ENCODE measurements at regions of chr18 and their contacts with region 1.

Region 1: DNA sequence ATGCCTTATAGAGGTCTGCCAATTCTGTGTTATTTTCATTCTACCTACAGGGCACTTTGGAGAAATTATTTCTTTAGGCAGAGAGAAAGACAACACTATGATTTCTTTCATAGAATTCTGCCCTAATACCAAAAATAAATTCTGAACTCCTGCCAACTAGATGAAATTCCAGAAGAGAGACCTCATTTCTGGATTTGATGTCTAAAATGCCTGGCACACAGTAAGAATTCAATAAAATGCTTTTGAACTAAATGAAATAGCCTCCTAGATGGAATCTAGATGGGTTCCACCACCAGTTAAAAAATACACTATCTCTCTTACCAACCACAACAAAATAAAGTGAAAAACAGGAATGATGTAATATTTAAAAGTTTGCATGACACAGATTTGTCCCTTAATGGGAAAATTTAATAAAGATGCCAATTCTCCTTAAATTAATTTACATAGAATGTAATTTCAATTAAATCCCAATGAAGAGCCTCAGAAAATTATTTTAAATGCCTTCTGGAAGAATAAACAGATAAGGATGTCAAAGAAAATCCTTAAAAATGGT is 75.0 kb downstream of the OSBPL1A start:
- DNase-seq: no peak
- H3K4me3 ChIP-seq: no peak overlapping the region
- H3K27ac ChIP-seq: peak overlapping the region in 1 of 2 donors; percentile 45
- H3K4me1 ChIP-seq: no peaks in the 10 kb centered on the region
- H3K27me3 ChIP-seq: no peaks in the 10 kb centered on the region
- CTCF ChIP-seq: no peak

Region 2: GRCh38 chr18:24112874-24113615 is 209.6 kb before region 1 on chr18:
- intact Hi-C with region 1: no loop called
- DNase-seq: no peak
- H3K4me3 ChIP-seq: no peak overlapping the region
- H3K27ac ChIP-seq: no peak overlapping the region
- H3K4me1 ChIP-seq: no peaks in the 10 kb centered on the region
- H3K27me3 ChIP-seq: no peaks in the 10 kb centered on the region
- CTCF ChIP-seq: no peak

Region 3: GRCh38 chr18:24219561-24220317 is 102.9 kb before region 1 on chr18:
- intact Hi-C with region 1: loop called (anchors 5 kb)
- DNase-seq: no peak
- H3K4me3 ChIP-seq: no peak overlapping the region
- H3K27ac ChIP-seq: peak overlapping the region; percentile 2 to 21
- H3K4me1 ChIP-seq: peaks cover 0 to 8% of the 10 kb centered on the region in 2 donors
- H3K27me3 ChIP-seq: no peaks in the 10 kb centered on the region
- CTCF ChIP-seq: no peak

Region 4: GRCh38 chr18:24246143-24246542 is 76.5 kb before region 1 on chr18:
- intact Hi-C with region 1: loop called (anchors 10 kb)
- DNase-seq: no peak
- H3K4me3 ChIP-seq: no peak overlapping the region
- H3K27ac ChIP-seq: no peak overlapping the region
- H3K4me1 ChIP-seq: no peaks in the 10 kb centered on the region
- H3K27me3 ChIP-seq: no peaks in the 10 kb centered on the region
- CTCF ChIP-seq: no peak

Region 5: DNA sequence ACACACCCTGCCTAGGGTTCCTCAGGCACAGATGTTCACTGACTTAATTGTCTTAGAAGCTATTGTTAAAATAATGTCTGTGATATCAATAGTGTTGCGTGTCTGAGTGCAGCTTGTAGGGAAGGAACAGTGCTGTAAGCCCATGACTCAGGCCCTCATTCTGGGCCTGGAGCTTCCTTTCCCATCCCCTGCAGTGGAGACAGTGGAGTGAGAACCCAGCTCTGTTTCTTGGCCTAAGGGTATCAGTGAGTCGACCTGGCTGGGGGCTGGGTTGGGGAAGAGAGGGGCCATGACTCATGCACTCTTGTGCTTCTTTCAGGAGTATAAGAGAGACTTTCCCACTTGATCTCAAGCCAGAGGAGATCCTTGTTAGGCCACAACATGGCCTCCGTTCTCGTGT is 244.5 kb after region 1 on chr18:
- intact Hi-C with region 1: no loop called
- DNase-seq: no peak
- H3K4me3 ChIP-seq: no peak overlapping the region
- H3K27ac ChIP-seq: no peak overlapping the region
- H3K4me1 ChIP-seq: no peaks in the 10 kb centered on the region
- H3K27me3 ChIP-seq: no peaks in the 10 kb centered on the region
- CTCF ChIP-seq: no peak

Measured in ascending aorta (tissue), 2 donors.